ENCODE measurements at regions of chr11 and their contacts with region 1.

Region 1: GRCh38 chr11:36056160-36056751 is 112.4 kb downstream of the LDLRAD3 start:
- H3K4me3 ChIP-seq: no peak overlapping the region
- H3K27ac ChIP-seq: no peak overlapping the region
- H3K4me1 ChIP-seq: peaks cover 7% of the 10 kb centered on the region
- CTCF ChIP-seq: no peak

Region 2: DNA sequence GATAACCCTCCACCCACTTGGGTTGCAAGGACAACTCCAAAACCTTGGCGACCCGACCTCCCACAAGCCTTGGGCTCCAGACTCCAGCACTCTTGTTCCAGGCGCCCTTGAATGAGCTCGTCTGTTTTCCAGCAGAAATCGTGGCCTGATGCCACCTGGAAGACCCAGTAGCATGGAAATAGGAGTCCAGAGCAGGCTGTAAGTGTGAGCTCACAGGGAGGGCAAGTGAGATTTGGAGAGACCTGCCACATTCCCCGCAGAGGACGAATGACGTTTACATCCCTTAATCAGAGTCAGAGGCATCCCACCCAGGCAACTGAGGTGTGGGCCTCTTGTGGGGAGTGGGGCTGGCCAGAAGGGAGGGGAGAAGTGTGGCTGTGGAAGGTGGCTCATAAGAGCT is 40.5 kb before region 1 on chr11:
- CTCF ChIA-PET with region 1: no interaction called
- POLR2A ChIA-PET with region 1: no interaction called
- H3K4me3 ChIP-seq: no peak overlapping the region
- H3K27ac ChIP-seq: no peak overlapping the region
- H3K4me1 ChIP-seq: no peaks in the 10 kb centered on the region
- CTCF ChIP-seq: no peak

Region 3: DNA sequence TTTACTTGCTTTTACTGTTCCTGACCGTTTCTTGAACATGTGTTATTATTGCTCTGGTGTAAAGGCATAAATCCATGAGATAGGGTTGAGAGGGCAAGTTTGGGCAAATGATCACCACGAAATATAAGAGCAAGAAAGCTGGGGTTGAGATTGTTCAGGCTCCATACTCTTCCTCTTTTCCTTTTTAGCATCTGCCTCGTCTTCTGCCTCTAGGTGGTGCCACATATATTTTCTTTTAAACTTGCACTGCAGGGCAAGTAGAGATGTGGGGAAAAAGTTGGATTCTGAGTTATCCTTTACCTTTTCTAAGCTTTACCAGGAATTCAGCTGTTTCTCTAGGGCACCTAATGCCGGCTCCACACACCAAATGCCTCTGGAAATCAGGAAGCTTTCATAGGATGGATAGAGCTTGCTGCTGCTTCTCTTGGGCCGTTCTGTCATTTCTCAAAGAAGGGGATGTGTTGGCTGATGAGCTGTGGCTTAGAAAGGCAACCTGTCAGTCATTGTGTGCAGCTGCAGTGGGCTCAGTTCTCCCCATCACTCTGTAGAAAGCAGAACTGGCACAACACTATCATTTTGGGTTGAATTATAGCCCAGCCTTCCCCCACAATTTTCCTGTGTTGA is 14.2 kb before region 1 on chr11:
- CTCF ChIA-PET with region 1: interaction called, 16 read pairs
- POLR2A ChIA-PET with region 1: no interaction called
- H3K4me3 ChIP-seq: no peak overlapping the region
- H3K27ac ChIP-seq: no peak overlapping the region
- H3K4me1 ChIP-seq: no peaks in the 10 kb centered on the region
- CTCF ChIP-seq: peak; percentile 25; the same call in 1 of the 2 replicates

Region 4: DNA sequence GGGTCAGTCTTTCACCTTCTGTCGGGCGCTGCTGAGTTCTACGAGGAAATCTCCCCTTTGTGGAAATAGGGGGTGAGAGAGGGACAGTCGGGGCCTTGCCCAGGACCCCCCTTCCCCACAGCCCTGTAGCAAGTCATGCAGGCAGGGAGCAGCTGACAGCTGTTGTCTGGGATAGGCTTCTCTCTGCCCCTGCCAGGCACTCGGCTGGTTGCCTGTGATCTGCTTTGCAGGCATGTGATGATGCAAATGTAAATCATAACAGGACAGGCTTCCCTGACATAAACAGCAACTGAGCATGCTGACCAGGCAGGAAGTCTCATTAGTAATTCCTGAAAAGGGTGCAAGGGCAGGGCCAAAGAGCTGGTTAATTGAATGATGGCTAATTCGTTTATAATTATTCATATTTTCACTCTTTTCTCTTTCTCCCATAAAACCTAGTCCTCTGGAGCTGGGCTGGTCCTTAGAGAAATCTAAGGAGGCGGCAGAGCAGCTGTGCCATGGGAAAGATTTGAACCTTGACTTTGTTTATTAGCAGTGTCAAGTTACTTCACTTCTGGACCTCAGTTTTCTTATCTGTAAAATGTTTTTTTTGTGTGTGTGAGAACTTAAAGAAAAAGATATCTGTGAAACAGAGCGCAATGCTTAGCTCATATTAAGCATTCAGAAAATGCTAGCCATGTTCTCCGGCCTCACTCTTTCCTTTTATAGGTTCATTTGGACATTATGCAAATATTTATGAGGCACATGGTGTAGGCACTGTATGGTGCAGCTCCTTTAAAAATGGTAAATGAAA is 17.4 kb after region 1 on chr11:
- CTCF ChIA-PET with region 1: interaction called, 12 read pairs
- POLR2A ChIA-PET with region 1: no interaction called
- H3K4me3 ChIP-seq: no peak overlapping the region
- H3K27ac ChIP-seq: no peak overlapping the region
- H3K4me1 ChIP-seq: 0 out of 2 replicates have a peak, but pooled peaks cover 2% of the 10 kb centered on the region
- CTCF ChIP-seq: no peak

Measured in HEK293 (cell line).